CD14-positive monocyte (primary cell): ENCODE measurements at regions of chr3 and their contacts with region 1.

Region 1: GRCh38 chr3:49929331-49930240 is at the start of gene MON1A:
- DNase-seq: peak; percentile 74 to 81 (median 76)
- H3K4me3 ChIP-seq: peak within 1 kb of the TSS; percentile 84 to 98 (median 84)
- H3K4me3 Mint-ChIP-seq: peak within 1 kb of the TSS; percentile 82 to 93
- H3K27ac ChIP-seq: peak within 1 kb of the TSS; percentile 47 to 81
- H3K27ac Mint-ChIP-seq: peak within 1 kb of the TSS; percentile 50 to 88 (median 85)
- H3K4me1 ChIP-seq: peaks cover 31 to 36% of the 10 kb centered on the region in 2 donors
- H3K4me1 Mint-ChIP-seq: peaks cover 30% of the 10 kb centered on the region
- H3K27me3 ChIP-seq: no peaks in the 10 kb centered on the region
- H3K27me3 Mint-ChIP-seq: peaks cover 0 to 3% (median 2%) of the 10 kb centered on the region in 3 donors
- CTCF ChIP-seq: peak; percentile 7
- polyA plus RNA-seq, gene MON1A: 5.4 to 6.6 (median 6.1) TPM

Region 2: DNA sequence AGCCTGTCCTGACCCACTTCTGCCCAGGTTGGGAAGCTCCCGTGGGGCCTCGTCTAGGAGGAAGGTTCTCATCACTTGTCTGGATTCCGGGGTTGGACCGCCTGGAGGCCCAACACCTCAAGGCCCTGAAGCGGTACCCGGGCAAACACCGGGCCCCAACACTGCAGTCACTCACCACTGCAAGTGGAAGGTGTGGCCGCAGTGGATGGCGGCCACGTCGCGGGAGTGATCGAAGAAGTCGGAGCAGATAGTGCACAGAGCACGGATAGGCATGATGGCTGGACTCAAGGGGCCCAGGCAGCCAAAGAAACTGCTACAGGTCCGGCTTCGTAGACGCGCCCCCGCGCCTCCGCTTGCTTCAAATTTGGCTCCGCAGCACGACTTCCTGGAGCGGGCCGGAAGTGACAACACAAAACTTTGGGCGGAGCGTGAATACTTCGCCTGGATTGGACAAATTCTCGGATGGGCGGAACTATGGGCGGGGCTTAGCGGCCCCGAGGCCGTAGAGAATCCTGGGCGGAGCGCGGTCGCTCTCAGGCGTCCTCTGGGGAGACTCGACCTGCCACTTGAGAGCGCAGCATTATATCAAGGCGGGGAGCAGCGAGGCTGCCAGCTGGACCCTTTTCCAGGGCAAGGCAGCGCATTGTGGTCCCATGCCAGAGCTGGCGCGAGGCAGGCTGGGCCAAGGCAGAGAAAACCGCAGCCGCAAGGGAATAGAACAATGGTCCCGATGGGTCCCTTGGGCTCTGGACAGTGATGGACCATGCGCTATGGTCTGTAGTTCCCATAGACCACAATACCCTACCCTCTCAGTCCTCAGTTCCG is 73.2 kb before region 1 on chr3 and contains the start of gene TRAIP:
- intact Hi-C with region 1: loop called (anchors 5 kb)
- DNase-seq: peak; percentile 90 to 94 (median 92)
- H3K4me3 ChIP-seq: peak within 1 kb of the TSS; percentile 65 to 83 (median 82)
- H3K4me3 Mint-ChIP-seq: peak within 1 kb of the TSS; percentile 82 to 89
- H3K27ac ChIP-seq: peak within 1 kb of the TSS; percentile 32 to 88
- H3K27ac Mint-ChIP-seq: peak within 1 kb of the TSS; percentile 68 to 96 (median 89)
- H3K4me1 ChIP-seq: peaks cover 13 to 16% of the 10 kb centered on the region in 2 donors
- H3K4me1 Mint-ChIP-seq: peaks cover 16% of the 10 kb centered on the region
- H3K27me3 ChIP-seq: no peaks in the 10 kb centered on the region
- H3K27me3 Mint-ChIP-seq: peaks cover 0 to 2% (median 1%) of the 10 kb centered on the region in 3 donors
- CTCF ChIP-seq: no peak
- polyA plus RNA-seq, gene TRAIP: 0.68 to 1.1 (median 0.95) TPM

Region 3: DNA sequence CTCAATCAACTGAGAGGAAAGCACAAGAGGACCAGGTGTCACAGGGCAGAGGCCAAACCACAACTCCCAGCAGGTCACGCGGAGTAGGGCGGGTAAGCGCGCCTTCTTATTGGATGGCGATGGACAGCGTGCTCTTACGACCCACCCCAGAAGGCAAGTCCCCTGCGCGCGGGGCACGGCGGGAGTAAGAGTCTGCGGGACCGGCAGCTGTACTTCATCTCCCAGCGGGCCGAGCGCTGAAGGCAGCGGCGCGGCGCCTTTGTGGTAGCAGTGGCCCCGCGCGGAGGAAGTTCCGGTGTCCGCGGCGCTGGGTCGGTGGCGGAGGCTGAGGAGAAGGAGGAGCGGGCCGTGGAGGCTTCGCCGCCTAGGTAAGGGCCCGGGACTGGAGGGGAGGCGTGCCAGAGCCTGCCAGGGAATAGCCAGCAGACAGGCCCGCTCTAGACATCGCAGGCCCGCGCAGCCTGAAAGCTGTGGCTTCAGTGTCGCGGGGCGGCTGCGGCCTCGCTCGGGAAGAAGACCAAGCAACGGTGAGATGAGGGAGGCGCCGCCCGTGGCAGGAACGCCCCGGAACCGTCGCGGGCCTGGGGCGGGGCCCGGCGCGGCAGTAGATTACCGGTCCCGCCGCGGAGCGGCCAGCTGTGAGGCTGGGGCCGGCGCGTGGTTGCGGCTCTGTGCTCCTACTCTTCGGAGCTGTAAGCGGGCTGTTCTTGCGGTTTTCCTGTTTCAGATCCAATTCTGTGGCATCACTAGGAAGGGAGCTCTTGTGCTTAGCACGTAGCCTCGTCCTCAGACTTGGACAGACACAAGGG is 10.5 kb after region 1 on chr3 and contains the start of gene RBM6:
- intact Hi-C with region 1: loop called in 1 of 2 experiments (anchors 1 kb)
- DNase-seq: peak; percentile 93 to 96 (median 94)
- H3K4me3 ChIP-seq: peak within 1 kb of the TSS; percentile 77 to 98 (median 92)
- H3K4me3 Mint-ChIP-seq: peak within 1 kb of the TSS; percentile 95
- H3K27ac ChIP-seq: peak within 1 kb of the TSS; percentile 89 to 98
- H3K27ac Mint-ChIP-seq: peak within 1 kb of the TSS; percentile 93 to 98 (median 96)
- H3K4me1 ChIP-seq: peaks cover 40 to 50% of the 10 kb centered on the region in 2 donors
- H3K4me1 Mint-ChIP-seq: peaks cover 46% of the 10 kb centered on the region
- H3K27me3 ChIP-seq: no peaks in the 10 kb centered on the region
- H3K27me3 Mint-ChIP-seq: peaks cover 0 to 2% (median 0%) of the 10 kb centered on the region in 3 donors
- CTCF ChIP-seq: no peak
- polyA plus RNA-seq, gene RBM6: 11.3 to 137 (median 17.8) TPM

Region 4: DNA sequence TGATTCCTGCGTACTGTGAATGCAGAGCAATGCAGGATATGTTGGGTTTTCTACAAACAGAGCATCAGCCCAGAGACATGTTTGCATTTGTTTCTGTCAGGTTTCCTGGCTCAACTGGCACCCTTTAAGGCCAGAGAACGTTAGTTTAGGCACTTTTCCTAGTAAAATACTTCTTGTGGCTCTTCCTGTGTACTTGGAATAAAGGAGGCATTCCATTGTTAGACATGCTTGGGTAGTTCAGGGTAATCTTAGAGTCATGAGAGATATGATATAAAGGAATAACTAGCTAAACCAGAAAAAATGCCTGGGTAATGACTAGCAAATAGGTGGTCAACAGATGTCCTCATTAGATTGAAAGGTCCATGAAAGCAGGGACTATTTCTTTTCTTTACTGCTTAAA is 98.8 kb after region 1 on chr3:
- intact Hi-C with region 1: no loop called
- DNase-seq: no peak
- H3K4me3 ChIP-seq: no peak overlapping the region
- H3K4me3 Mint-ChIP-seq: no peak overlapping the region
- H3K27ac ChIP-seq: no peak overlapping the region
- H3K27ac Mint-ChIP-seq: no peak overlapping the region
- H3K4me1 ChIP-seq: no peaks in the 10 kb centered on the region
- H3K4me1 Mint-ChIP-seq: no peaks in the 10 kb centered on the region
- H3K27me3 ChIP-seq: no peaks in the 10 kb centered on the region
- H3K27me3 Mint-ChIP-seq: no peaks in the 10 kb centered on the region
- CTCF ChIP-seq: no peak

Region 5: DNA sequence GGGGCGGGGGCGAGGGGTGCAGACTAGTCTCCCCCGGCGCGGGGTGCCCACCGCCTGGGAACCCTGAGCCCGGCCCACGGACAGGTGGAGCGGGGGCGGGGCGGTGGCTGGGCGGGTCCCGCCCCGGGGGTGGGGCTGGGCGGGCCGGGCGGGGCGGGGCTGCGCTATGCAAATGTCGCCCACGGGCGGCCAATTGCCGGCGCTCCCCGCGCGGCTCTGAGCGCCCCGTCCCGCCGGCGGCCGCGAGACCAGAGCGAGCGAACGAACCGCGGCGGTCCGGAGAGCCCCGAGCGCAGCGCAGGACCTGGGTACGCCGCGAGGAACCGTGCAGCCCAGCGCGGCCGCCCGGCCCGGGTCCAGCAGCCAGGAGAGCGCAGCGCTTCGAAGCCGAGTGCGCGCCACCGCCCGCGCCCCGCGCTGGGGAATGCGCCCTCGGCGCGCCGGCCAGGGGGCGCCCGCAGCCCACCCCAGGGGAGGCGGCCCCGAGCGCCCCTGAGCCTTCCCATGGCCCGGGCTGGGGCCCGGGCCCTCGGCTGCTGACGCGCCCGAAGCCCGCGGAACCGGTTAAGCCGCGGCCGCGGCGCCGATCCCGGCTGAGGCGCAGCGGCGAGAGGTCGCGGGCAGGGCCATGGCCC is 225.4 kb after region 1 on chr3 and contains the start of gene SEMA3F:
- intact Hi-C with region 1: no loop called
- DNase-seq: peak; percentile 62 to 75 (median 74)
- H3K4me3 ChIP-seq: peak within 1 kb of the TSS; percentile 5 to 71 (median 9)
- H3K4me3 Mint-ChIP-seq: peak within 1 kb of the TSS; percentile 80 to 89
- H3K27ac ChIP-seq: no peak within 1 kb of the TSS
- H3K27ac Mint-ChIP-seq: peak within 1 kb of the TSS in 4 of 7 donors; percentile 31 to 65 (median 49)
- H3K4me1 ChIP-seq: peaks cover 10 to 19% of the 10 kb centered on the region in 2 donors
- H3K4me1 Mint-ChIP-seq: peaks cover 25% of the 10 kb centered on the region
- H3K27me3 ChIP-seq: peaks cover 19 to 49% of the 10 kb centered on the region in 2 donors
- H3K27me3 Mint-ChIP-seq: peaks cover 44 to 56% (median 54%) of the 10 kb centered on the region in 3 donors
- CTCF ChIP-seq: no peak
- polyA plus RNA-seq, gene SEMA3F: 0.01 TPM in 1 of 3 donors, not detected in the others

Region 6: GRCh38 chr3:50358911-50359759 is 429.5 kb after region 1 on chr3 and contains the start of gene TMEM115:
- intact Hi-C with region 1: loop called in 1 of 2 experiments (anchors 10 kb)
- DNase-seq: peak; percentile 94 to 97 (median 96)
- H3K4me3 ChIP-seq: peak within 1 kb of the TSS; percentile 47 to 91 (median 89)
- H3K4me3 Mint-ChIP-seq: peak within 1 kb of the TSS; percentile 90 to 95
- H3K27ac ChIP-seq: peak within 1 kb of the TSS; percentile 57 to 91
- H3K27ac Mint-ChIP-seq: peak within 1 kb of the TSS; percentile 82 to 95 (median 93)
- H3K4me1 ChIP-seq: peaks cover 42 to 45% of the 10 kb centered on the region in 2 donors
- H3K4me1 Mint-ChIP-seq: peaks cover 45% of the 10 kb centered on the region
- H3K27me3 ChIP-seq: peaks cover 0 to 2% of the 10 kb centered on the region in 2 donors
- H3K27me3 Mint-ChIP-seq: peaks cover 0 to 5% (median 1%) of the 10 kb centered on the region in 3 donors
- CTCF ChIP-seq: no peak
- polyA plus RNA-seq, gene TMEM115: 14.5 to 36.2 (median 32.9) TPM